Left ventricle myocardium inferior (tissue), 1 donor: ENCODE measurements at regions of chr12 and their contacts with region 1.

Region 1: GRCh38 chr12:123905319-123905925 is 67.2 kb downstream of the CCDC92 start:
- DNase-seq: no peak
- H3K4me3 ChIP-seq: no peak overlapping the region
- H3K27ac ChIP-seq: no peak overlapping the region
- H3K4me1 ChIP-seq: peaks cover 6% of the 10 kb centered on the region
- H3K27me3 ChIP-seq: peaks cover 32% of the 10 kb centered on the region
- CTCF ChIP-seq: peak; percentile 82

Region 2: DNA sequence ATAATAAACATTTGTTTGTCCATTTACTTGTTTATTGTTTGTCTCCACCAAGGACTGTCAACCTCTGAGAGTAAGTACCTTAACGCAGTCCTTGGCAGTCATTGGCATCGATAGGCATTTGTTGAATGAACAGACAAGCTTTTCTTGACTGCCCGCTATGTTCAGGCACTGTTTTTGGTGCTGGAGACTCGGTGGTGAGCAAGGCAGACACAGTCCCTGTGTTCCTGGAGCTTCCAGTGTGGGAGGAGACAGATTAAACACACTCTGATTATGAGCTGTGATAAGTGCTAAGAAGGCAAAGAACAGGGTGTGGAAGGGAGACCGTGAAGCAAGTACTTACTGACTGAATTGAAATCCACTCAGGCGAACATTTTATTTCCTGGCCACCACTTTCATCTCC is 192.0 kb before region 1 on chr12:
- intact Hi-C with region 1: no loop called
- DNase-seq: no peak
- H3K4me3 ChIP-seq: peak overlapping the region; percentile 100
- H3K27ac ChIP-seq: no peak overlapping the region
- H3K4me1 ChIP-seq: peaks cover 40% of the 10 kb centered on the region
- H3K27me3 ChIP-seq: no peaks in the 10 kb centered on the region
- CTCF ChIP-seq: no peak

Region 3: DNA sequence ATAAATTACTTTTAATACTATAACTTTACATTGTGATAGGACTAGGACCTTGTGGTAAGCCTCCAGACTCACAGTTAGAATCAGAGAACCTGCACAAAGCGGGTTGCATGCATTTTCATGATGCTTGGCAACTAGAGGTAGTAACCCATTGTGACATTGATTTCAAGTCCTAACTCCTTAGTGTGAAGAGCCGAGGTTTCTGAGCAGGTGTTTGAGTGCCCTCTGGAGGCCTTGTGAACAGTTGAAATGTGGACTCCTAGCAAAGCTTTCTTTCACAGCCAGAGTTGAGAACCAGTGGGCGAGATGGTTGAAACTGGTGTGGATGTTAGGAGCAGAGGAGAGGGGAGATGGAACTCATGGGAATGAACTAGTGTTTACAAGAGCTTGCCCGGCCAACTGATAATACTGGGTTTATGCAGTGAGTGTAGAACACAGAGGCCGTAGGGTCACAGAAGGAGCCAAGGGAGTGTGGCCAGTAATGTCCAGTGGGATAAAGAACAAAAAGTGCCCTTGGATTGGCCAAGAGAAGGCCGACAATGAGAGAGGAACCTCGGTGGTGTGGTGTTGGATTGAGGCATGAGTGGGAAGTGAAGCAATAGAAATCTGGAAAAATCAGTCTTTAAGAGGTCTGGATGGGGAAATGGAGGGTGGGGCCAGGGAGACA is 78.5 kb after region 1 on chr12:
- intact Hi-C with region 1: loop called (anchors 10 kb)
- DNase-seq: no peak
- H3K4me3 ChIP-seq: no peak overlapping the region
- H3K27ac ChIP-seq: peak overlapping the region; percentile 16
- H3K4me1 ChIP-seq: peaks cover 75% of the 10 kb centered on the region
- H3K27me3 ChIP-seq: no peaks in the 10 kb centered on the region
- CTCF ChIP-seq: peak; percentile 73

Region 4: DNA sequence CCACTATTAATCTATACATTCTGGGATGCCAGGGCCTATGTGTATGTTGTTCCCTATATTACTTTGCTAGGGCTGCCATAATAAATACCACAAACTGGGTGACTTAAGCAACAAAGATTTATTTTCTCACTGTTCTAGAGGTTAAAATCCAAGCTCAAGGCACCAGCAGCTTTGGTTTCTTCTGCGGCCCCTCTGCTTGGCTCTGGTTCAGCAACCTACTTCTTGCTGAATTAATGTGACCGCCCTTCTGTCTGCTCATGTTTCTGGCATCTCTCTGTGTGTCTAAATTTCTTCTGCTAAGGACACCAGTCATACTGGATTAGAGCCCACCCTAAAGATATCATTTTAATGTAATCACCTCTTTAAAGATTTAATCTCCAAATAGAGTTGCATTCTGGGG is 152.3 kb after region 1 on chr12:
- intact Hi-C with region 1: no loop called
- DNase-seq: no peak
- H3K4me3 ChIP-seq: no peak overlapping the region
- H3K27ac ChIP-seq: no peak overlapping the region
- H3K4me1 ChIP-seq: peaks cover 6% of the 10 kb centered on the region
- H3K27me3 ChIP-seq: peaks cover 8% of the 10 kb centered on the region
- CTCF ChIP-seq: no peak